ENCODE measurements at regions of chr4 and their contacts with region 1.

Region 1: DNA sequence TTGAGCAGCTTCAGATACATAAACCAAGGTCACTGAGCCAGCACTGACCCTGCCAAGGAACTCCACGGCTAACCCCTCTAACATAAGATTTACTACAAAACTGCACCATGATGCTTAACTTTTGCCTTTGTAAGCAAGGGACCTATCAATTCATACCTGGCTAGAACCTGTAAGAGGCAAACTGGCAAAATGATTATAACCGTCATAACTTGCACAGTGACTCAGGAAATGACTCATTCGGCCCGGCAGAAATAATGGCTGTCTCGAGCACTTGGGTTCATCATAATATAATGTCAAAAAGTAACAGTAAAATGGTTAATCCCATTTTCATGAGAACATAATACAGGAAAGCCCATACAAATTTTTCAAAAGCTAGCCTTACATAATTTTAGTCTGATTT is 17.2 kb downstream of the RASGEF1B start:
- DNase-seq: no peak
- ATAC-seq: peak; percentile 32
- H3K4me3 ChIP-seq: no peak overlapping the region
- H3K4me3 Mint-ChIP-seq: no peak overlapping the region
- H3K27ac ChIP-seq: no peak overlapping the region
- H3K27ac Mint-ChIP-seq: peak overlapping the region in 3 of 9 donors; percentile 7 to 81 (median 37)
- H3K4me1 ChIP-seq: no peaks in the 10 kb centered on the region
- H3K4me1 Mint-ChIP-seq: peaks cover 0 to 16% (median 0%) of the 10 kb centered on the region in 7 donors
- H3K27me3 ChIP-seq: no peaks in the 10 kb centered on the region
- H3K27me3 Mint-ChIP-seq: no peaks in the 10 kb centered on the region

Region 2: GRCh38 chr4:80309294-80310004 is 1145.0 kb before region 1 on chr4:
- CTCF ChIA-PET with region 1: no interaction called
- POLR2A ChIA-PET with region 1: no interaction called
- intact Hi-C with region 1: no loop called
- DNase-seq: no peak
- ATAC-seq: no peak
- H3K4me3 ChIP-seq: no peak overlapping the region
- H3K4me3 Mint-ChIP-seq: no peak overlapping the region
- H3K27ac ChIP-seq: no peak overlapping the region
- H3K27ac Mint-ChIP-seq: no peak overlapping the region
- H3K4me1 ChIP-seq: no peaks in the 10 kb centered on the region
- H3K4me1 Mint-ChIP-seq: no peaks in the 10 kb centered on the region
- H3K27me3 ChIP-seq: peaks cover 0 to 4% of the 10 kb centered on the region in 2 donors
- H3K27me3 Mint-ChIP-seq: peaks cover 14 to 42% (median 32%) of the 10 kb centered on the region in 5 donors

Region 3: GRCh38 chr4:81335122-81335912 is 119.2 kb before region 1 on chr4:
- CTCF ChIA-PET with region 1: no interaction called
- POLR2A ChIA-PET with region 1: no interaction called
- intact Hi-C with region 1: no loop called
- DNase-seq: no peak
- ATAC-seq: no peak
- H3K4me3 ChIP-seq: no peak overlapping the region
- H3K4me3 Mint-ChIP-seq: no peak overlapping the region
- H3K27ac ChIP-seq: no peak overlapping the region
- H3K27ac Mint-ChIP-seq: no peak overlapping the region
- H3K4me1 ChIP-seq: no peaks in the 10 kb centered on the region
- H3K4me1 Mint-ChIP-seq: no peaks in the 10 kb centered on the region
- H3K27me3 ChIP-seq: no peaks in the 10 kb centered on the region
- H3K27me3 Mint-ChIP-seq: peaks cover 0 to 4% (median 0%) of the 10 kb centered on the region in 5 donors

Region 4: GRCh38 chr4:81440949-81441348 is 13.6 kb before region 1 on chr4:
- CTCF ChIA-PET with region 1: no interaction called
- POLR2A ChIA-PET with region 1: no interaction called
- intact Hi-C with region 1: loop called in 1 of 2 experiments (anchors 2 kb)
- DNase-seq: no peak
- ATAC-seq: no peak
- H3K4me3 ChIP-seq: no peak overlapping the region
- H3K4me3 Mint-ChIP-seq: no peak overlapping the region
- H3K27ac ChIP-seq: no peak overlapping the region
- H3K27ac Mint-ChIP-seq: no peak overlapping the region
- H3K4me1 ChIP-seq: no peaks in the 10 kb centered on the region
- H3K4me1 Mint-ChIP-seq: no peaks in the 10 kb centered on the region
- H3K27me3 ChIP-seq: no peaks in the 10 kb centered on the region
- H3K27me3 Mint-ChIP-seq: no peaks in the 10 kb centered on the region

Region 5: DNA sequence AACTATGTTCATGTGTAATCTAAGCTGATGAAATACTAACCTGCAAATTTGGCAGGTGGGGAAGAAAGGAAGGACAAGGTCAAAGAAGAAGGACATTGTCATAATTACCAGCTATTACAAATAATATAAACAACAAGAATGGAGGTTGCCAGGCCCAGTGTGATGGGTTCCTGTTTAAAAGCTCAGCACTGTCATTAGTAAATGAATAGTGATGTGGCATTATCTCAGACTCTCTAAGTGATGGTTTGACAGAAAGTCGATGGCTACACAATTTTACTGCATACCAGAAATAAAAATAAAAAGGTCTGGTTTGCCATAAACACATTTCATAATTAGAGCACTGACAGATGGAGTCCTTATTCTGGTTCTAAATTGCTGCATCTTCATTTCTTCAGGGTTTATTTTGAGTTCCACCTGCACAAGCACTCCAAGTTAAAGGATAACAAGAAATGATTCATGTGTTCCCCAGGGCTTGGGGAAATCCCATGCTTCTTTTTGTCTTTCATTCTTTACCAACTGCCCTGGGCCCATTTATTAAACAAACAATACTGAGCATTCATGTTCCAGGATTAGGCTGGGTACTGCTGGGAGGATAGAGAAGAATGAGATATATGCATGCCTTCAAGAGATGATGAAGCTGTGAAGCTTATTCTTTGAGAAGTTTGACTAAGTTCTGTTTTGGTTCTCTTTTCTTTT is 385.0 kb after region 1 on chr4:
- CTCF ChIA-PET with region 1: no interaction called
- POLR2A ChIA-PET with region 1: no interaction called
- intact Hi-C with region 1: no loop called
- DNase-seq: no peak
- ATAC-seq: no peak
- H3K4me3 ChIP-seq: no peak overlapping the region
- H3K4me3 Mint-ChIP-seq: no peak overlapping the region
- H3K27ac ChIP-seq: no peak overlapping the region
- H3K27ac Mint-ChIP-seq: no peak overlapping the region
- H3K4me1 ChIP-seq: no peaks in the 10 kb centered on the region
- H3K4me1 Mint-ChIP-seq: no peaks in the 10 kb centered on the region
- H3K27me3 ChIP-seq: no peaks in the 10 kb centered on the region
- H3K27me3 Mint-ChIP-seq: peaks cover 0 to 3% (median 0%) of the 10 kb centered on the region in 5 donors